Heart right ventricle (tissue), 16 donors: ENCODE measurements at regions of chr16 and their contacts with region 1.

Region 1: DNA sequence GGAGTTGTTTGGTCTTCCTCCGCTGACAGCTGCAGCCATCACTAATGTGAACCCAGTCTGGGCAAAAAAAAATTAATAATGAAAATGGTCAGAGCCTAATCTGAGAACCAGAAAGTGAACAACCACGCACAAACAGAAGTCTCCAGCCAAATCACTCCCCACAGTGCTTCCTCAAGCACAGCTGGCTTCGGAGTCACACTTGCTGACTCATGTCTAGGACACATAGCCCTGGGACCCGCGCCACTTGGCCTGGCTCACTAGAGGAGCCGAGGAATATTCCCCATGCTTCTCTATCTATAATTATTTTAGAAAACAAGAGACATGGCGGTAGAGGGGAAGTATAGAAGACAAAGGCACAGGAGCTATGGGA is 109.1 kb downstream of the ZFHX3 start:
- DNase-seq: peak; percentile 83 to 91
- ATAC-seq: peak; percentile 94 to 98 (median 96)
- H3K4me3 ChIP-seq: peak overlapping the region in 4 of 10 donors; percentile 15 to 29 (median 24)
- H3K27ac ChIP-seq: peak overlapping the region; percentile 57 to 90 (median 81)
- H3K4me1 ChIP-seq: peaks cover 15 to 63% (median 44%) of the 10 kb centered on the region in 9 donors
- H3K27me3 ChIP-seq: no peaks in the 10 kb centered on the region
- CTCF ChIP-seq: no peak

Region 2: DNA sequence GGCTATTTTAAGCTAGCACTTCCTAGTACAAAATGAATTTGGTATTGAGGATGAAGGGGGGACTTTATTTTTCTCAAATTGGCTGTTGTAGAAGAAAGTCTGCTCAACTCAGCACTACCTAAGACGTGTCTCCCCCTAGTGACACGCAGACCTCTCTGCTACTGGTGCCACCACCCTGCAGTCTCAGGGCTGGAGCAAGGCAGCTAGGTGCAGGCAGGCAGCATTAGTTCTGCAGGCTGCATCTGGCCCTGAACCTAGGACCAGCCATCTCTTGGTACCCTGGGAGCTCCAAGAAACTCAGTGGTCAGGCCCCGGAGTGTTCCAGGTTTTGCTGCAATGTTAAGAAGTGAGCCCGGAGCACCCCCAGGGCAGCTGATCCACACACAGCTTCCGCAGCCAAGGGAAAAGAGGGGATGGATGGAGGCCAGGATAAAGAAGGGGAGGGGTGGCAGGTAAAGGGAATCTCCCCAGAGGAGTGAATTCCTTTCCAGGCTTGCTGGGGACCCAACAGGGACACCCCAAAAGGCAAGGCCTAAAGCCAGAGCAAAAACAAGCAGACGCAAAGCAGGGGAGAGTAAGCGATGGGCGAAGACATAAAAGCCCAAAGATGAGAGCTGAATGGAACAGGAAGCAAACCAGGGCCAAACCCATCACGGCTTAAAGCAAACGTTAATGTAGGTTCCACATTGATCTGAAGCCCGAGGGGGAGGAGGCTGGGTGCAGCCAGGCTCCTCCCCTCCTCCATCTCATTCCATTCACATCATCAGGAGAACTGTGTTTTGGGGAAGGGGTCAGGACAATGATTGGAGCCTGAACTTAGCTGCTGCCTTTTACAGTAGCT is 91.4 kb before region 1 on chr16:
- intact Hi-C with region 1: loop called in 3 of 10 experiments (anchors 5 to 10 kb)
- DNase-seq: peak in 1 of 2 donors; percentile 33
- ATAC-seq: peak in 6 of 8 donors; percentile 16 to 51 (median 40)
- H3K4me3 ChIP-seq: no peak overlapping the region
- H3K27ac ChIP-seq: peak overlapping the region in 9 of 10 donors; percentile 51 to 84 (median 75)
- H3K4me1 ChIP-seq: peaks cover 11 to 81% (median 52%) of the 10 kb centered on the region in 9 donors
- H3K27me3 ChIP-seq: no peaks in the 10 kb centered on the region
- CTCF ChIP-seq: peak in 7 of 9 donors; percentile 42 to 65 (median 54)

Region 3: GRCh38 chr16:72894293-72895151 is 44.3 kb before region 1 on chr16:
- intact Hi-C with region 1: loop called in 1 of 10 experiments (anchors 5 kb)
- DNase-seq: peak in 1 of 2 donors; percentile 58
- ATAC-seq: peak; percentile 60 to 84 (median 72)
- H3K4me3 ChIP-seq: peak overlapping the region in 1 of 10 donors; percentile 11
- H3K27ac ChIP-seq: peak overlapping the region in 9 of 10 donors; percentile 3 to 70 (median 57)
- H3K4me1 ChIP-seq: peaks cover 0 to 40% (median 18%) of the 10 kb centered on the region in 9 donors
- H3K27me3 ChIP-seq: no peaks in the 10 kb centered on the region
- CTCF ChIP-seq: no peak

Region 4: GRCh38 chr16:72989579-72990551 is 51.1 kb after region 1 on chr16:
- intact Hi-C with region 1: loop called in 1 of 10 experiments (anchors 5 kb)
- DNase-seq: peak; percentile 36 to 51
- ATAC-seq: peak in 7 of 8 donors; percentile 22 to 77 (median 44)
- H3K4me3 ChIP-seq: peak overlapping the region in 3 of 10 donors; percentile 10 to 18 (median 17)
- H3K27ac ChIP-seq: peak overlapping the region; percentile 36 to 74 (median 62)
- H3K4me1 ChIP-seq: peaks cover 22 to 90% (median 69%) of the 10 kb centered on the region in 9 donors
- H3K27me3 ChIP-seq: no peaks in the 10 kb centered on the region
- CTCF ChIP-seq: no peak

Region 5: DNA sequence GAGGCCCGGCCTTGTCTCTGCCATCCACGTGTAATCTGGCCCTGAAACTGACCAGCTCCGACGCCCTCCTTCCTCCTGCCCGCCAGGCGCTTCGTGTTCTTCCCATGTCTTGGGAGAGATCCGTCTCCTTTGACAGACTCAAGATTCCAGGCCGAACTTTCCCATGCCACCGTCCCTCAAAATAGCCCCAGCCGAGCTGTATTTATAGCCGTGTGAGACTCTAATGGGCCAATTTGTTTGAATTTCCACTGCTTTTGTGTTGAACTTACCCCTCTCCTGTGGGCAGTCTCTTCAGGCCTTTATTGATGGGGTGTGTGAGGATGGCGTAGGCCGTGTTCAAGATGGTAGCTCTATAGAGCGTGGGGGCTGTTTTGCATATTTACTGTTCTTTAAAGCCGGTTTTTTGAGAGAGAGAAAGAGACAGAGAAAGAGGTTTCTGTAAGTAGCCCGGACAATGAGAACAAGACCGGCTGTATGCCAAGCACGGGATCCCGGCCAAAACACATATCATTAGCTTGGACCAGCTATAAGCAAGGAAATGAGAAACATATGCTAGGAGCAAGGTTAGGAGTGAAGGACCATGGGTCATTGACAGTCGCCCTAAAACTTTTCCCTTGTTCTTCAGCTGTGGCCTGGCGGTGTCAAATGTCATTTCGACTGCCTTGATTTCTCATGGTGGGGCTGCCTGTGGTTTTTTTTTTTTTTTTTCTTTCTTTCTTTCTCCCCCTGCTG is 233.6 kb after region 1 on chr16:
- intact Hi-C with region 1: loop called in 1 of 10 experiments (anchors 5 kb)
- DNase-seq: peak; percentile 82 to 86
- ATAC-seq: peak; percentile 68 to 87 (median 78)
- H3K4me3 ChIP-seq: peak overlapping the region in 1 of 10 donors; percentile 1
- H3K27ac ChIP-seq: peak overlapping the region; percentile 41 to 86 (median 70)
- H3K4me1 ChIP-seq: peaks cover 0 to 42% (median 16%) of the 10 kb centered on the region in 9 donors
- H3K27me3 ChIP-seq: no peaks in the 10 kb centered on the region
- CTCF ChIP-seq: peak in 8 of 9 donors; percentile 5 to 50 (median 36)